ENCODE measurements at regions of chr10 and their contacts with region 1.

Region 1: DNA sequence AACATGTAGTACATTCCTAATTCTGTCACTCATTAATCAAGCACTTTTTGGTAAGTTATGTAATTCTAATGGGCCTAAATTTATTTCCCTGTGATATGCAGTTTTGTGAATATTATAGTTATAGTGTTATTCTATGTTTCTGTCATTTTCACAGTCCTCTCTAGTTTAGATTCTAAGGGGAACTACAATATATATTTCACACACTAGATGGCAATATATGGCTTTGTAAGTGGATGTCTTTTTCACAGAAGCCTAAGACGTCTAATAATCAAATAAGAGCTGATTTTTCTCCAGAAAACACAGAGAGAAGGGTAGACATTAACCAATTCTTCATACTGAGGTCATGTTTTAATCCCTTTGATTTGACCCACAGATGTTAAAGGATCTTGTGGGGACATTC is 18.0 kb downstream of the RNLS start:
- DNase-seq: peak in 1 of 5 donors; percentile 17
- H3K4me3 ChIP-seq: no peak overlapping the region
- H3K4me3 Mint-ChIP-seq: no peak overlapping the region
- H3K27ac ChIP-seq: no peak overlapping the region
- H3K27ac Mint-ChIP-seq: no peak overlapping the region
- H3K4me1 ChIP-seq: peaks cover 5% of the 10 kb centered on the region
- H3K4me1 Mint-ChIP-seq: peaks cover 3 to 6% (median 6%) of the 10 kb centered on the region in 4 donors
- H3K27me3 ChIP-seq: no peaks in the 10 kb centered on the region
- H3K27me3 Mint-ChIP-seq: peaks cover 0 to 2% of the 10 kb centered on the region in 2 donors

Region 2: GRCh38 chr10:88538038-88538437 is 27.0 kb before region 1 on chr10:
- CTCF ChIA-PET with region 1: no interaction called
- POLR2A ChIA-PET with region 1: no interaction called
- intact Hi-C with region 1: no loop called
- DNase-seq: no peak
- H3K4me3 ChIP-seq: no peak overlapping the region
- H3K4me3 Mint-ChIP-seq: no peak overlapping the region
- H3K27ac ChIP-seq: no peak overlapping the region
- H3K27ac Mint-ChIP-seq: no peak overlapping the region
- H3K4me1 ChIP-seq: no peaks in the 10 kb centered on the region
- H3K4me1 Mint-ChIP-seq: no peaks in the 10 kb centered on the region
- H3K27me3 ChIP-seq: no peaks in the 10 kb centered on the region
- H3K27me3 Mint-ChIP-seq: peaks cover 0 to 4% of the 10 kb centered on the region in 2 donors

Region 3: DNA sequence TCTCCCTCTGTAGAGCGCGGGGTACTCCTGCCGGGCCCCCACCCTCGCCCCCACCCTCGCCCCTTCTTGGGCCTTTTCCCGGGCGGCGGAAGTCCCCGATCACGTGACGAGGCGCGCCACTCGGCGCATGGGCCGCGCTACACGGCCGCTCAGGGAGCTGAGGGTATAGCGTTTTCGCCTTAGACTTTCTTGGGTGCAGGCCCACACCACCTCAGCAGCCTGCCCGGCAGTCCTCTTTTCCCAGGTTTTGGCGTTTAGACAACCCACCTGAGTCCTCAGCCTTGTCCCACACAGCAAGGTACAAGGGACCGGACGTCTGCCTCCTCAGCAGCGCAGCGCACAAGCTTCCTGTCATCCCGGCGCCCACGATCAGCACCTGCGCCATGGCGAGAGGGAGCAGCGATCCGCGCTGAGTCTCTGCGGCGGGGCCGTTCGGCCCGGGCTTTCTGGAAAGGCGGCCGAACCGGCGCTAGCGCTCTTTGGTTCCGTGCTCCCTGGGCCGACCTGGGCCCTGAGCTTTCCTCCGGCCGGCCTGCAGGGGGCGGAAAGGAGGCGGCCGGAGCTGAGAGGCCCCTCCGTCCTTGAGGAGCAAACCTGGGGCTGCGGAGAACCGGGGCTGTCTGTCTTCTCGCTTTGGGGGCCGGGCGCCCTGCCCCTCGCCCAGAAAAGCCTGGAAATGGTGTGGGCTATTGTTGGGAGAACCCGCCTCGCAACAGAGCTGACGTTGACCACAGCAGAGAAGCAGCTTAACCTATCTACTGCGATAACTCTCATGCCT is 17.9 kb after region 1 on chr10 and contains the start of gene RNLS:
- CTCF ChIA-PET with region 1: interaction called, 14 read pairs
- POLR2A ChIA-PET with region 1: interaction called, 6 read pairs
- intact Hi-C with region 1: no loop called
- DNase-seq: peak; percentile 60 to 73 (median 65)
- H3K4me3 ChIP-seq: peak within 1 kb of the TSS; percentile 72 to 89
- H3K4me3 Mint-ChIP-seq: peak within 1 kb of the TSS; percentile 91 to 96 (median 93)
- H3K27ac ChIP-seq: peak within 1 kb of the TSS; percentile 77
- H3K27ac Mint-ChIP-seq: peak within 1 kb of the TSS; percentile 78 to 96 (median 93)
- H3K4me1 ChIP-seq: peaks cover 7% of the 10 kb centered on the region
- H3K4me1 Mint-ChIP-seq: peaks cover 6 to 26% (median 14%) of the 10 kb centered on the region in 4 donors
- H3K27me3 ChIP-seq: no peaks in the 10 kb centered on the region
- H3K27me3 Mint-ChIP-seq: no peaks in the 10 kb centered on the region
- total RNA-seq, gene RNLS: 1.7 to 1.9 TPM

Region 4: GRCh38 chr10:88687853-88688467 is 122.9 kb after region 1 on chr10:
- CTCF ChIA-PET with region 1: no interaction called
- POLR2A ChIA-PET with region 1: no interaction called
- intact Hi-C with region 1: loop called (anchors 10 kb)
- DNase-seq: peak in 4 of 5 donors; percentile 18 to 26 (median 21)
- H3K4me3 ChIP-seq: no peak overlapping the region
- H3K4me3 Mint-ChIP-seq: no peak overlapping the region
- H3K27ac ChIP-seq: no peak overlapping the region
- H3K27ac Mint-ChIP-seq: no peak overlapping the region
- H3K4me1 ChIP-seq: no peaks in the 10 kb centered on the region
- H3K4me1 Mint-ChIP-seq: no peaks in the 10 kb centered on the region
- H3K27me3 ChIP-seq: no peaks in the 10 kb centered on the region
- H3K27me3 Mint-ChIP-seq: peaks cover 0 to 2% of the 10 kb centered on the region in 2 donors

Measured in CD4-positive, alpha-beta memory T cell (primary cell).